ENCODE measurements at regions of chr19 and their contacts with region 1.

Region 1: DNA sequence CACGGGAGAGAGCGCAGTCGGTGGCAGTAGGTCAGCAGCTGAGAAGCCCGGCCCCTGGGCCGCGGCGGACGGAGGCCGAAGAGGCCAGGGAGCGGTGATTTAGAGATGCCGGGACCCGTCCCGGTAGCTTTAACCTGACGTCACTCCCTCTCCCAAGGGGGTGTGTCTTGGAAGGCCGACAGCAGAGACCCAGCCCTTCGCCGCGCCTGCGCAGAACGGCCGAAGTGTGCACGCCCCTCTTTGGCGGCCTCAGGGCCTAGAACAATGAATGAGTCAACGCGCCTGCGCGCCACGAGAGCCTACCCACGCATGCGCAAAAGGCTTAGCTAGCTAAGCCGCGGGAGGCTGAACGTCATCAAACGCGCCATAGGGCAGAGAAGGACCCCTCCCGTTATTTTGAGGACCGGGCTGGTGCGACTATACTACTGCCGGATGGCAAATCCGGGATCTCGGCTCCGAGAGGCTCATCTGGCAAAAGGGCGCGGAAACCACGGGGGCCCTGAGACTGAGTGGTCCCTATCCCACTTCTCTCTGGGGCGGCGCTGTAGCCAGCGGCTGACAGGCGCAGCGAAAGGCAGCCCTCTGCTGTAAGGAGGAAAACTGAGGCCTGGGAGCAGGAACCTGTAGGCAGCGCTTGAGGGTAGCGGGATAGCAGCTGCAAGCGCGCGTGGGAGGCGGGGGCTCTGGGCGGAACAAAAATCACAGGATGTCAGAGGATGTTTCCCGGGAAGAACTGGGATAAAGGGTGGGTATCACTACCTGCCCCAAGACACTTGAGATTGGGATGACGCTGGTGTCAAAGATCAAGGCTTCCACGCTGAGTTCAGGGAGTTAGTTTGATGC is at the starts of genes IRGQ and ZNF576:
- DNase-seq: peak; percentile 99
- ATAC-seq: peak; percentile 83
- H3K4me3 Mint-ChIP-seq: peak within 1 kb of the TSS; percentile 98
- H3K27ac Mint-ChIP-seq: peak within 1 kb of the TSS; percentile 98
- H3K4me1 Mint-ChIP-seq: peaks cover 42% of the 10 kb centered on the region
- H3K27me3 Mint-ChIP-seq: no peaks in the 10 kb centered on the region
- CTCF ChIP-seq: no peak
- total RNA-seq, gene IRGQ: 13.1 and 14.1 TPM in 2 replicates
- total RNA-seq, gene ZNF576: 14.5 and 17.3 TPM in 2 replicates

Region 2: GRCh38 chr19:43519436-43520088 is 76.7 kb before region 1 on chr19:
- CTCF ChIA-PET with region 1: interaction called, 27 read pairs
- POLR2A ChIA-PET with region 1: interaction called, 4 read pairs
- intact Hi-C with region 1: no loop called
- DNase-seq: peak; percentile 57
- ATAC-seq: peak; percentile 51
- H3K4me3 Mint-ChIP-seq: peak overlapping the region; percentile 44
- H3K27ac Mint-ChIP-seq: peak overlapping the region; percentile 15
- H3K4me1 Mint-ChIP-seq: peaks cover 18% of the 10 kb centered on the region
- H3K27me3 Mint-ChIP-seq: no peaks in the 10 kb centered on the region
- CTCF ChIP-seq: peak; percentile 62

Region 3: DNA sequence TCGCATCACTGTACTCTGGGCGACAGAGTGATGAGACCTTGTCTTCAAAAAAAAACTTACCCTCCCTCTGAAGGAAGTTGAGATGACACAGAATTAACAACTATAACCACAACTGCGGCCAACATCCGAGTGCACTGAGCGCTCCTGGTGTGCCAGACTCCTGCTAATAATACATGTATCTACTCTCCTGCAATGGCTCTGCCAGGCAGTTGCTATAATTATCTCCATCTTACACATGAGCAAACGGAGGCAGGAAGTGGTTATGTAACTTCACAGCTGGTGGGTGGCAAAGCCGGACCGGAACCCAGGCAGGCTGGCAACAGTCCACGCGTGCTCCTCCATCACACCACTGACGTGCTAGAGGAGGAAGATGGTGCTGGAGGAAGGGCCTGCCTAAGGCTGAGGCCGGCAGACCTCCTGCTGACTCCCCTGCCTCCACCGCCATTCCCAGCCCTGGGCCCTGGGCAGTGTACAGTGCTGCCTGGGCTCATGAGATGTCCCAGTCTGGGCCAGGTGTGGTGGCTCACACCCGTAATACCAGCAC is 33.5 kb before region 1 on chr19:
- CTCF ChIA-PET with region 1: interaction called, 92 read pairs
- POLR2A ChIA-PET with region 1: interaction called, 4 read pairs
- intact Hi-C with region 1: loop called (anchors 1 kb)
- DNase-seq: peak; percentile 56
- ATAC-seq: peak; percentile 84
- H3K4me3 Mint-ChIP-seq: peak overlapping the region; percentile 56
- H3K27ac Mint-ChIP-seq: peak overlapping the region; percentile 93
- H3K4me1 Mint-ChIP-seq: peaks cover 58% of the 10 kb centered on the region
- H3K27me3 Mint-ChIP-seq: no peaks in the 10 kb centered on the region
- CTCF ChIP-seq: no peak

Region 4: DNA sequence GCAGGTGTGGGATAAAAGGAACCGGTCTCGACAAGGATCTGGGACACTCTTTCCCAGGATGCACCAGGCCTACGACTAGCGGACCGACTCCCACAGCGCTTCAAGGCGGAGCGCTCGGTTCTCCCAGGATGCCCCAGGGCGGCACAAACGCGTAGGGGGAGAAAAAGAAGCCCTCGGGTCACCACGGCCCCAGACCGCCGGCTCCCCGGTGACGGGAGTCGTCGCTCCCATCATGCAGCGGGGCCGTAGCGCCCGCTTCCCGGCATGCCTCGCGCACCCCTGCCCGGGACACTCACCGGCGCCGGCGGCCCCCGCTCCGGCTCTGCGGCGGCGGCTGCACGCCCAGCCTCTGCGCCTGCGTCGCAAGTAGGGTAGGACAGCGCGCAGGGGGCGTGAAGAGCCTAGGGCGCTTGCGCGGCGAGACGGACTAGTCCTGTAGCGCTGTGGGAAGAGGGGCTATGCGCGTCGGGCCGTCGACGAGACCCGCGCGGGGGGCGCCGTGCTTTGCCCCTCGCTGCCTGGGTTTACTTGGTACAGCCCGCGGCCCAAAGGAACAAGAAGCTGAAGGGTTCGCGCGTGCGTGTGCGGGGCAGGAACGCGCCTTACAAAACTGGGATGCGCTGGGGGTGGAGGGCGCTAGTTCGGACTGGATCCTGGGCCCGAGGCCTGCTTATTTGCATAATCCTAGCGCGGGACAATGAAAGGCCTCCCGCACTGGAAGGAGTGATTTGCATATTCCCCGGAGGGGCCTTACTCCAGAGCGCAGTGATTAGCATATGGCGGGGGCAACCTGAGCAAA is 23.2 kb after region 1 on chr19 and contains the start of gene ZNF428:
- CTCF ChIA-PET with region 1: no interaction called
- POLR2A ChIA-PET with region 1: interaction called, 7 read pairs
- intact Hi-C with region 1: loop called (anchors 1 kb)
- DNase-seq: peak; percentile 83
- ATAC-seq: peak; percentile 87
- H3K4me3 Mint-ChIP-seq: peak within 1 kb of the TSS; percentile 94
- H3K27ac Mint-ChIP-seq: peak within 1 kb of the TSS; percentile 96
- H3K4me1 Mint-ChIP-seq: peaks cover 21% of the 10 kb centered on the region
- H3K27me3 Mint-ChIP-seq: no peaks in the 10 kb centered on the region
- CTCF ChIP-seq: no peak
- total RNA-seq, gene ZNF428: 26.2 and 29.1 TPM in 2 replicates

Region 5: GRCh38 chr19:43668406-43669158 is 72.4 kb after region 1 on chr19:
- CTCF ChIA-PET with region 1: interaction called, 4 read pairs
- POLR2A ChIA-PET with region 1: interaction called, 9 read pairs
- intact Hi-C with region 1: loop called (anchors 1 kb)
- DNase-seq: peak; percentile 76
- ATAC-seq: peak; percentile 88
- H3K4me3 Mint-ChIP-seq: peak overlapping the region; percentile 80
- H3K27ac Mint-ChIP-seq: peak overlapping the region; percentile 24
- H3K4me1 Mint-ChIP-seq: peaks cover 44% of the 10 kb centered on the region
- H3K27me3 Mint-ChIP-seq: peaks cover 9% of the 10 kb centered on the region
- CTCF ChIP-seq: no peak

Region 6: GRCh38 chr19:44113138-44113783 is 517.0 kb after region 1 on chr19 and contains the start of gene ZNF225:
- CTCF ChIA-PET with region 1: no interaction called
- POLR2A ChIA-PET with region 1: no interaction called
- intact Hi-C with region 1: no loop called
- DNase-seq: peak; percentile 65
- ATAC-seq: peak; percentile 95
- H3K4me3 Mint-ChIP-seq: peak within 1 kb of the TSS; percentile 97
- H3K27ac Mint-ChIP-seq: peak within 1 kb of the TSS; percentile 83
- H3K4me1 Mint-ChIP-seq: peaks cover 31% of the 10 kb centered on the region
- H3K27me3 Mint-ChIP-seq: no peaks in the 10 kb centered on the region
- CTCF ChIP-seq: no peak
- total RNA-seq, gene ZNF225: 7.9 and 9.2 TPM in 2 replicates

Region 7: GRCh38 chr19:44530777-44531176 is 934.6 kb after region 1 on chr19:
- CTCF ChIA-PET with region 1: no interaction called
- POLR2A ChIA-PET with region 1: no interaction called
- intact Hi-C with region 1: no loop called
- DNase-seq: no peak
- ATAC-seq: no peak
- H3K4me3 Mint-ChIP-seq: no peak overlapping the region
- H3K27ac Mint-ChIP-seq: no peak overlapping the region
- H3K4me1 Mint-ChIP-seq: no peaks in the 10 kb centered on the region
- H3K27me3 Mint-ChIP-seq: peaks cover 14% of the 10 kb centered on the region
- CTCF ChIP-seq: no peak

Measured in activated B cell treated with CpG ODN at 0.5 μM for 24 hours (primary cell).